HepG2 (cell line): ENCODE measurements at regions of chr9 and their contacts with region 1.

Region 1: DNA sequence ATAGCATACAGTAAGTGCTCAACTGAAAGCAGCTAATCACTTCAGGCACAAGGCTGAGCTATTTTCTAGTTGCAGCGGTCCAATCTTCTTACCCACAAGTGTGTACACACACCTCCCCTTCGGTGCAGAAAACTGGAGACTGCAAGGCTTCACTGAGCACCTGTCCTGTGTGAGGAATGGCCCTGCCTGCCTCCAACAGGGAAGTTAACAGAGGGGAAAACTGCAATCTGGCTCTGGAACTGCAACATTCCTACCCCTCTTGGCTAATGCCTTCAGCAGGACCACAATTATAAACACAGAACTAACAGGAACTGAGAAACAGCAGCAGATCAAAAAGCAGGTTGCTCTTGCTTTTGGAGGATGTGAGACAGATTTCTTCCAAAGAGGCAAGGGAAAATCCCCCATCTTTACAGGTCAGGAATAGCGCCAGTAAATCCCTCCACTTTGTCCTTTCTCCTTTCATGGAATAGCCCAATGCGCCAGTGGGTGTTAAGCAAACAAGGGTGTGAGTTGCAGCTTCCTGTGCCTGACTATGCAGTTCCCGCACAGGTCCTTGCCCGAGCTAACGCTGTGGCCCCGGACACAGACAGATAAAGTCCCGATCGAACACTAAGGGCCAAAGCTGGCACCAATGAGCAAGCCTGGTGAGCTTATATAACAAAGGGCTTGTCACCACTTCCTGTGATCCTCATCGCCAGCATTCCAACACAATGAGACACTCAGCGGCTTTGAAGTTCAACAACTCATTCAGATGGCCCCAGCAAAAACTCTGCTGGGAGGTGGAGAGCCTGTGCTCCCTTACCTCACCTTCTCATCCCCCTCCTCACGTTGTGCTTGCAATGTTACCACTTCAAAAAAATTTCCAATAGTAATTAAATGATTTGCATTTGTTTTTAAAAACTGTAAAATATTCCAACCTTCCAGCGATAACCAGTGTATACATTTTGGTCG is 21.5 kb downstream of the SHB start:
- DNase-seq: peak; percentile 99
- ATAC-seq: peak; percentile 94
- H3K4me3 ChIP-seq: peak overlapping the region; percentile 8 to 54 (median 26); a peak in 5 of 6 replicates
- H3K27ac ChIP-seq: peak overlapping the region; percentile 92
- H3K4me1 ChIP-seq: peaks cover 95% of the 10 kb centered on the region
- H3K27me3 ChIP-seq: no peaks in the 10 kb centered on the region
- CTCF ChIP-seq: peak; percentile 24
- EP300 ChIP-seq: peak; percentile 91
- POLR2A ChIP-seq: peak; percentile 73 to 82
- RAD21 ChIP-seq: peak; percentile 35; the same call in 1 of the 2 replicates

Region 2: DNA sequence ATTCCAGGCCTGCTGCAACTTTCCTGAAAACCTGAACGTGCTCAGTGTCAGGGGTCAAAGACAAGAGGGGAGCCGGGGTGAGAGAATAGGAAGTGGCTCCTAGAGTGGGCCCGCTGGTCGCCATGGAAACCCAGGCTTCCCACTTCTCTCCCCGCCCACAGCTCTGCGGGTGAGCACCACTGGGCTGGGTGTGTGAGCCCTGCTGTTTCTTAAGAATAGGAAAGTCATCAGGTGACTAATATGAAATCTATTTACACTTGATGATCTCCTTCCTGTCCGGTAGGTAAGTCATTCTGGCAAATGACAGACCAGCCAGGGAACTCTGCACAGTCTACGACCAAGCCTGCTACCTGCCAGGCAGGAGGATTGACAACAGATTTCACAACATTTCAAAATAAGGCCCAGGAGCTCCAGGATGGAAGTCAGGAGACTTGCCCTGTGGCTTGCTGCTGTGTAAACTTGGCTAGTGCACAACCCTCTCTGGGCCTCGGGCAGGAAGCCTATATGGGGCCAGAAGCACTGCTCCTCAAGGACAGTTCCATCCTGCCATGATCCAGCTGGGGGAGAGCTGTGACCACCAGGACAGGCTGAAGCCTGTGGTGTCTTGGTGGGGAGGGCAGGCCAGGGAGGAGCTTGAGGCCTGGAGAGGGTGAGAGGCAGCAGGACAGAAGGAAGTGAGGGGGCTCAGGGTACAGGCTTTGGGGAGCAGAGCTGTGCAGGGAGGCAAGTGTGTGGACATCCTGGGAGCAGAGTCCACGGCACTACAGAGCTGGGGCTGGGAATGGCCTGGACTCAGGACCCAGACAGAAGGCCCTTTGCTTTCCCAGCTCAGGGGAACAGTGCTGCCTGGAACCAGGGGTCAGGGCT is 39.2 kb before region 1 on chr9:
- CTCF ChIA-PET with region 1: no interaction called
- POLR2A ChIA-PET with region 1: interaction called, 11 read pairs
- in situ Hi-C with region 1: no loop called
- intact Hi-C with region 1: no loop called
- DNase-seq: peak; percentile 76
- ATAC-seq: peak; percentile 94
- H3K4me3 ChIP-seq: peak overlapping the region in 1 of 3 experiments; percentile 15; a peak in 1 of 6 replicates
- H3K27ac ChIP-seq: peak overlapping the region; percentile 69
- H3K4me1 ChIP-seq: peaks cover 51% of the 10 kb centered on the region
- H3K27me3 ChIP-seq: no peaks in the 10 kb centered on the region
- CTCF ChIP-seq: peak; percentile 37; the same call in 1 of the 2 replicates
- EP300 ChIP-seq: peak in 1 of 2 experiments; percentile 14; a peak in 1 of 4 replicates
- POLR2A ChIP-seq: no peak
- RAD21 ChIP-seq: 0 out of 2 replicates have a peak, but pooled peaks have one; percentile 43

Region 3: GRCh38 chr9:38061326-38061977 is 13.9 kb after region 1 on chr9:
- CTCF ChIA-PET with region 1: no interaction called
- POLR2A ChIA-PET with region 1: interaction called, 30 read pairs
- in situ Hi-C with region 1: no loop called
- intact Hi-C with region 1: loop called (anchors 1 kb)
- DNase-seq: no peak
- ATAC-seq: no peak
- H3K4me3 ChIP-seq: no peak overlapping the region; a peak in 1 of 6 replicates
- H3K27ac ChIP-seq: peak overlapping the region; percentile 83
- H3K4me1 ChIP-seq: peaks cover 99% of the 10 kb centered on the region
- H3K27me3 ChIP-seq: no peaks in the 10 kb centered on the region; a peak in 1 of 5 replicates
- CTCF ChIP-seq: no peak
- EP300 ChIP-seq: no peak
- POLR2A ChIP-seq: no peak
- RAD21 ChIP-seq: no peak

Region 4: DNA sequence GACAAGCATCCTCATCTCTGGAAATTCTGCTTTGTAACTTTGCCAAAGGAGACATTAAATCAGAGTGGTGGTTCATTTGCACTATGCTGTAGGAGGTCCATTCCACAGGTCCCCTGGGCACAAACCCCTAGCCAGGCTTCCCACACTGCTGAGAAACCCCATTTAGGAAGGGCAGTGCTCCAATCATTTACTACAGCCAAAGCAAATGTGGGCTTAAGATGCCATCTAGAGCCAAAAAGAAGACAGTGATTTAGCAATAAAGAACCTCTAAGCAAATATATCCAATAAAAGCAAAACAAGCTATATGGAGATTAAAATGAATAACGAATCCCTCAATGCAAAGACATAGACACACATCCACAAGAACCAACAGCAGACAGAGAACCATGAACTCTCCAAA is 216.0 kb after region 1 on chr9:
- CTCF ChIA-PET with region 1: no interaction called
- POLR2A ChIA-PET with region 1: no interaction called
- in situ Hi-C with region 1: no loop called
- intact Hi-C with region 1: no loop called
- DNase-seq: peak; percentile 7
- ATAC-seq: no peak
- H3K4me3 ChIP-seq: no peak overlapping the region
- H3K27ac ChIP-seq: no peak overlapping the region
- H3K4me1 ChIP-seq: no peaks in the 10 kb centered on the region
- H3K27me3 ChIP-seq: no peaks in the 10 kb centered on the region
- CTCF ChIP-seq: peak; percentile 62
- EP300 ChIP-seq: no peak
- POLR2A ChIP-seq: no peak
- RAD21 ChIP-seq: 0 out of 2 replicates have a peak, but pooled peaks have one; percentile 27

Region 5: GRCh38 chr9:38432922-38433510 is 385.4 kb after region 1 on chr9:
- CTCF ChIA-PET with region 1: no interaction called
- POLR2A ChIA-PET with region 1: no interaction called
- in situ Hi-C with region 1: no loop called
- intact Hi-C with region 1: loop called (anchors 10 kb)
- DNase-seq: peak; percentile 43
- ATAC-seq: peak; percentile 14; the same call in 1 of the 3 replicates
- H3K4me3 ChIP-seq: no peak overlapping the region
- H3K27ac ChIP-seq: no peak overlapping the region
- H3K4me1 ChIP-seq: peaks cover 58% of the 10 kb centered on the region
- H3K27me3 ChIP-seq: peaks cover 0 to 9% of the 10 kb centered on the region in 2 experiments; a peak in 2 of 5 replicates
- CTCF ChIP-seq: peak; percentile 63
- EP300 ChIP-seq: no peak
- POLR2A ChIP-seq: no peak
- RAD21 ChIP-seq: 0 out of 2 replicates have a peak, but pooled peaks have one; percentile 19